ENCODE measurements at regions of chr5 and their contacts with region 1.

Region 1: DNA sequence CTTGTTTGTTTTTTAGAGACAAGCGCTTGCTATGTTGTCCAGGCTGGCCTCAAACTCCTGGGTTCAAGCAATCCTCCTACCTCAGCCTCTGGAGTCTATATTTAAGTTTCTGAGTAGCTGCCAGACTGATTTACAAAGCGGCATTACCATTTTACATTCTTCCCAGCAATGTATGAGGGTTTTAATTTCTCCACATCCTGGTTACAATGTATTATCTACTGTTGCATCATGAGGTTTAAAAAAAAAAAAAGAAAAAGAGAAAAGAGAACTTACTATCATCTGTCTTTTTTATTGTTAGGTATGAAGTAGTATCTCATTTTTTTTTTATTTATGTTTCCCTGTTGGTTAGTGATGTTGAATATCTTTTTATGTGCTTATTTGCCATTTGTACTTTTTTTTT is 18.9 kb upstream of the CLINT1 start:
- DNase-seq: no peak
- H3K4me3 ChIP-seq: no peak overlapping the region
- H3K27ac ChIP-seq: no peak overlapping the region
- H3K4me1 ChIP-seq: no peaks in the 10 kb centered on the region
- H3K27me3 ChIP-seq: no peaks in the 10 kb centered on the region
- CTCF ChIP-seq: no peak

Region 2: DNA sequence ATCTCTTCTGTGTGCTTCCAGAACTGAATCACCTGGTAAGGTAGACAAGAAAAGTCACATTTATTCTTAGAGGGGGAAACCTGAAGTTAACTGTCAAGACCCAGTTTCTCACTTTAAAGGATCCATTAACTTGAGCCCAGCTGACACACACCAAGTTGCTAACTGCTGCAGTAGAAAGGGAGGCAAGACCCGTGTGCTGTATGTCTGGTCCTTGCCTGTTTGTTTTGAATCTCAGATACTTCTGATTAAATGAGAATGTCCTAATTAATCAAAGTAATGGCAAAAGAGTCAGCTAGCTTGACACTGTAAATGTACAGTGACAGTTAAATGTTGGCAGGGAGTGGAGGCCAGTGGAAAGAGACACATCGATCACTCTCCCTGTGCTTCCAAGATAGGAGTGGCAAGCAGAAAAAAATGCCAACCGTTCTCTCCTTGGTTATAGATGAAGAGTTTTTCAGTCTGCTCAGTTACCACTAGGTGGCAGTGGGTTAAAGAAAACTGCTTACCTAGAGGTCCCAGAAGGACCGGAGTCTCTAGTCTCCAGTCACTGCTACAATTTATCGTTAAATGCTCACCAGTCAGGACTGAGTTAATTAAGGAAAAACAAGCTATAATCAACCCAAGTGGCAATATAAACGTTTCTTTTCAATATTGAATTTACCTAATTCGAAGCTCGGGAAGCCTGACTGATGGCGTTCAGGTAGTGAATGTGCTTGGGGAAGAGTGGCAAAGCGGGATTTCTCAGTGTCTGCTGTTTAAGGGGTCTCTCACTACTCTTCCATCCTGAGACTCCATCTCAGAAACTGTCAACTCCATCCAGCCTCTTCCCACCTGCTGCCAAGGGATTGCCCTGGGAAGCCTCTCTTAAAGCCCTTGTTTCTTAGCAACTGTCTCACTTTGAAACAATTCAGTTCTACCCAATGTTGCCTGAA is 115.9 kb before region 1 on chr5:
- CTCF ChIA-PET with region 1: no interaction called
- POLR2A ChIA-PET with region 1: interaction called, 12 read pairs
- intact Hi-C with region 1: no loop called
- DNase-seq: peak in 1 of 2 experiments; percentile 30
- H3K4me3 ChIP-seq: no peak overlapping the region
- H3K27ac ChIP-seq: no peak overlapping the region
- H3K4me1 ChIP-seq: no peaks in the 10 kb centered on the region
- H3K27me3 ChIP-seq: no peaks in the 10 kb centered on the region
- CTCF ChIP-seq: peak; percentile 88

Region 3: GRCh38 chr5:157890836-157891597 is 13.2 kb after region 1 on chr5:
- CTCF ChIA-PET with region 1: no interaction called
- POLR2A ChIA-PET with region 1: no interaction called
- intact Hi-C with region 1: no loop called
- DNase-seq: no peak
- H3K4me3 ChIP-seq: no peak overlapping the region
- H3K27ac ChIP-seq: no peak overlapping the region
- H3K4me1 ChIP-seq: peaks cover 16% of the 10 kb centered on the region
- H3K27me3 ChIP-seq: no peaks in the 10 kb centered on the region
- CTCF ChIP-seq: no peak

Measured in PC-9 (cell line).